HCT116 (cell line): ENCODE measurements at regions of chr12 and their contacts with region 1.

Region 1: GRCh38 chr12:30754709-30755394 is at the start of gene CAPRIN2:
- DNase-seq: peak; percentile 89
- ATAC-seq: peak; percentile 91
- H3K4me3 ChIP-seq: peak within 1 kb of the TSS; percentile 64 to 77
- H3K27ac ChIP-seq: peak within 1 kb of the TSS; percentile 71
- H3K4me1 ChIP-seq: peaks cover 4 to 21% of the 10 kb centered on the region in 2 experiments; a peak in 3 of 4 replicates
- H3K27me3 ChIP-seq: no peaks in the 10 kb centered on the region
- CTCF ChIP-seq: peak; percentile 23 to 55 (median 32); a peak in 4 of 6 replicates
- POLR2A ChIP-seq: peak; percentile 60
- RAD21 ChIP-seq: peak; percentile 79
- total RNA-seq, gene CAPRIN2: 30.8 TPM

Region 2: GRCh38 chr12:30457621-30458289 is 297.1 kb before region 1 on chr12:
- CTCF ChIA-PET with region 1: no interaction called
- POLR2A ChIA-PET with region 1: no interaction called
- RAD21 ChIA-PET with region 1: no interaction called
- intact Hi-C with region 1: loop called (anchors 5 kb)
- DNase-seq: peak; percentile 75
- ATAC-seq: peak; percentile 96
- H3K4me3 ChIP-seq: no peak overlapping the region
- H3K27ac ChIP-seq: no peak overlapping the region
- H3K4me1 ChIP-seq: peaks cover 0 to 14% of the 10 kb centered on the region in 2 experiments; a peak in 3 of 4 replicates
- H3K27me3 ChIP-seq: no peaks in the 10 kb centered on the region
- CTCF ChIP-seq: peak; percentile 48 to 64 (median 56); a peak in 5 of 6 replicates
- POLR2A ChIP-seq: no peak
- RAD21 ChIP-seq: peak; percentile 72

Region 3: GRCh38 chr12:30695199-30696103 is 59.4 kb before region 1 on chr12 and contains the start of gene IPO8:
- CTCF ChIA-PET with region 1: no interaction called
- POLR2A ChIA-PET with region 1: no interaction called
- RAD21 ChIA-PET with region 1: interaction called in 1 of 2 experiments, 4 read pairs
- intact Hi-C with region 1: loop called (anchors 5 kb)
- DNase-seq: peak; percentile 87
- ATAC-seq: peak; percentile 84
- H3K4me3 ChIP-seq: peak within 1 kb of the TSS; percentile 88 to 98
- H3K27ac ChIP-seq: peak within 1 kb of the TSS; percentile 70
- H3K4me1 ChIP-seq: peaks cover 12 to 32% of the 10 kb centered on the region in 2 experiments; a peak in 3 of 4 replicates
- H3K27me3 ChIP-seq: no peaks in the 10 kb centered on the region
- CTCF ChIP-seq: peak in 2 of 3 experiments; percentile 29; a peak in 3 of 6 replicates
- POLR2A ChIP-seq: no peak
- RAD21 ChIP-seq: no peak
- total RNA-seq, gene IPO8: 41.4 TPM

Region 4: DNA sequence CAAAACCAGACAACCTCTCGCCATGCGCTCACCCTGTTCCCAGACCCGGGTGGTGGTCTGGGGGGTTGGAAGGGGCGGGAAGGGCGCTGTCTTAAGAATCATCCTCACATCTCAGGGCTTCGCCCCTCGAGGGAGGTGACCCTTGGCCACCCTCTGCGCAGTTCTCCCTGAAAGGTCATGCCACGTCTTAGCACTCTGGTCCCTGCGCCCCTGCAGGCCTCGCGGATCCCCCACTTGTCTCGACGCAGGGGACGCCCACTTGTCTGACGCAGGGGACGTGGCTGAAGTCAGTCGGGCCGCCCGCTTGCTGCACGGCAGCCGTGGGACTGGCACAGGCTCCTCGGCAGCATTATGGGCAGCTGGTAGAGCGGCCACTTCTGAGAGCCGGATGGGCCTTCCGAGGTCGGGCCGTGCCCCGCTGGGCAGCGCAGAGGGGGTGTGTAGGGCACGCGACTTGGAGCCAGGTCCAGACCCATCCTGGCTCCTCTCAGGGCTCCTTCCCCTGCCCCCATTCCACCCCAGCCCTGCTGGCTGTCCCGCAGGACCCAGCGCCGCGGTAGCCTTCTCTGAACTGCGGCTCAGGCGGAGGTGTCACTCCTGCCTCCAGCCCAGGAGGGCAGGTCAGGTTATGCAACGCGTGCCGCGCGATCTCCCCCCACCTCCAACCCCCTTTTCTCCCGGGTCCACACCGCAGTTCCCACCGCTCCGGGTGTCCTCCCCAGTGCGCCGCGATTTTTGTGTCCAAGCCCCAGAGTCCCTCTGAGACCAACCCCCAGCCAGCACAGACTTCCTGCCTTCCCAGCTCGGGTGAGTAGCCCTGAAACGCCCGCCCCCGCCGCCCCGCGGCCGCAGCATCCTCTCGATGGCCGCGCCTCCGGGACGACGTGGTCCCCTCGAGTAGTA is 40.8 kb after region 1 on chr12:
- CTCF ChIA-PET with region 1: no interaction called
- POLR2A ChIA-PET with region 1: interaction called, 27 read pairs
- RAD21 ChIA-PET with region 1: interaction called, 3 to 4 read pairs
- intact Hi-C with region 1: loop called (anchors 1 kb)
- DNase-seq: peak; percentile 64
- ATAC-seq: peak; percentile 67
- H3K4me3 ChIP-seq: peak overlapping the region; percentile 75 to 76
- H3K27ac ChIP-seq: peak overlapping the region; percentile 99
- H3K4me1 ChIP-seq: peaks cover 30 to 61% of the 10 kb centered on the region in 2 experiments
- H3K27me3 ChIP-seq: no peaks in the 10 kb centered on the region
- CTCF ChIP-seq: no peak
- POLR2A ChIP-seq: peak; percentile 43
- RAD21 ChIP-seq: no peak